GM23248 (cell line): ENCODE measurements at regions of chr21 and their contacts with region 1.

Region 1: DNA sequence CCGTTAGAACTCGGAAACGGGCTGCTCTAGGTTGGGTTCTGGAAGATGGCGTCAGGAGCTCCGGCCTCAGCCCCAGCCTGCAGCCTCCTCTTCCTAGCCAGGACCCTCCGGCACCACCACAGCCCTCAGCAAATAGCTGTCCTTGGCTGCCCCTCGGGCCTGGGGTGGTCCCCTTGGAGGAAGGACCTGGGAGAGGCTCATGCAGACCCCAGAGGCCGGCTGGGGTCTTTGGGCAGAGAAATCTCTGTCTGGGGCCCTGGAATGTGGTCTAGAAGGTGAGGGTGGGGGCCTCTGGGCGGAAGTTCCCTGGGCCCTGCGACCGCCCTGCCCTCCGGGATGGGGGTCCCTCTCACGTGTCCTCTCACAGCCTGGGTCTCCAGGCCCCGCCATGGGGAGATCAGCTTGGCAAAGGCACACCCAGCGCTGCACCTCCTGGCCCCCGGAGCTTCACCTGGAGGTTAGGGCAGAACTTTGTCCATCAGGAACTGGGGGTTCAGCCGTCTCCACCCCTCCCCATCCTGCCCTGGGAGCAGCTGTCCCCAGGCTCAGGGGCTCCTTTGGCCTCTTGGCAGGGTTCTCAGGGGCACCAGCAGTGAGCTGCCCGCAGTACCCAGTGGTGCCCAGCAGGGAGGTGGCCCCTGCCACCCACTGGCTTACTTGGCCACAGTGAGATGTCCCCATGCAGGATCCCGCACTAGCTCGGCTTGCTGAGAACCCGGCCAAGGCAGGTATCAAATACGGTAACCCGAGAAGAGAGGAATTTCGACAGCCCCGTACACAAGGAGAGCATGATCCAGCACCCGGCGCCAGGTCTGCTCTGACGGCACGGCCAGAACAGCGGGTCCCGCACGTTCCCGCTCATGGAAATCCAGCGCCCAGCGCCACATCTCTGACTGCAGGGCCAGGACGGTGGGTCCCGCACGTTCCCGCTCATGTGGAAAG is 36.6 kb downstream of the RRP1 start:
- DNase-seq: no peak
- H3K4me3 ChIP-seq: no peak overlapping the region
- H3K27ac ChIP-seq: no peak overlapping the region
- H3K4me1 ChIP-seq: peaks cover 8% of the 10 kb centered on the region; the same call in 1 of the 2 replicates
- H3K27me3 ChIP-seq: peaks cover 6% of the 10 kb centered on the region; the same call in 1 of the 2 replicates

Region 2: GRCh38 chr21:43639470-43640178 is 186.3 kb before region 1 on chr21:
- in situ Hi-C with region 1: no loop called
- DNase-seq: peak; percentile 81
- H3K4me3 ChIP-seq: no peak overlapping the region
- H3K27ac ChIP-seq: peak overlapping the region; percentile 70
- H3K4me1 ChIP-seq: peaks cover 11% of the 10 kb centered on the region
- H3K27me3 ChIP-seq: no peaks in the 10 kb centered on the region

Region 3: DNA sequence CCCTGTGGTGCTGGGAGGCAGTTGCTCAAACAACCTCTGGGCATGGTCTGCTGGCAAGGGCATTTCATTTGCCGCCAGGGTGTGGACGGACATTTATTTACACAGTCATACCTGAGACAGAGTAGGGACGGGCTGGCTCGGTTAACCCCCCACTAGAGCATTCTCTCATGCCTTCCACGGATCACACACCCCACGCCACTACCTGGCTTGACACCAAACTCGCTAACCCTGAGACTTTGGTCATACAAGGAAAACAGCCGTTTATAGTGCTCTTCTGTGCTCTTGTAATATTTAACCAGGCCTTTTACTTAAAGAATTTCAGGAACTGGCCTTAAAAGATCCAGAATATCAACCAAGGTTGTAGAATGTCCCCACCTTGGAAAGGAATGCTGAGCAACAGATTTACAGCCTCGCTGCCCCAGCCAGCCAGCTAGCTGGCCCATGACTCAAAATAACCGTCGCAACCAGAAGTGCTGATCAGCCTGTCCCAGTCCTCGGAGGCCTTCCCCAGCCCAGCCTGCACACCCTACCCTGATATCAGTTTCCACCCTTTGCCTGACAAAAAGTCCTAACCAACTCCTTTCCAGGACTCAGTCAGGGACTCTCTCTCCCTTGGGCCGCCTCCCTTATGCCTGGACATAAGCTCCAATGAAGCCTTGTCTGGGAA is 113.5 kb before region 1 on chr21:
- in situ Hi-C with region 1: no loop called
- DNase-seq: peak; percentile 78
- H3K4me3 ChIP-seq: 0 out of 2 replicates have a peak overlapping the region, but pooled peaks have one; percentile 17
- H3K27ac ChIP-seq: peak overlapping the region; percentile 42
- H3K4me1 ChIP-seq: peaks cover 13% of the 10 kb centered on the region
- H3K27me3 ChIP-seq: no peaks in the 10 kb centered on the region

Region 4: GRCh38 chr21:43893536-43894205 is 67.7 kb after region 1 on chr21:
- in situ Hi-C with region 1: no loop called
- DNase-seq: no peak
- H3K4me3 ChIP-seq: no peak overlapping the region
- H3K27ac ChIP-seq: no peak overlapping the region
- H3K4me1 ChIP-seq: no peaks in the 10 kb centered on the region
- H3K27me3 ChIP-seq: no peaks in the 10 kb centered on the region

Region 5: DNA sequence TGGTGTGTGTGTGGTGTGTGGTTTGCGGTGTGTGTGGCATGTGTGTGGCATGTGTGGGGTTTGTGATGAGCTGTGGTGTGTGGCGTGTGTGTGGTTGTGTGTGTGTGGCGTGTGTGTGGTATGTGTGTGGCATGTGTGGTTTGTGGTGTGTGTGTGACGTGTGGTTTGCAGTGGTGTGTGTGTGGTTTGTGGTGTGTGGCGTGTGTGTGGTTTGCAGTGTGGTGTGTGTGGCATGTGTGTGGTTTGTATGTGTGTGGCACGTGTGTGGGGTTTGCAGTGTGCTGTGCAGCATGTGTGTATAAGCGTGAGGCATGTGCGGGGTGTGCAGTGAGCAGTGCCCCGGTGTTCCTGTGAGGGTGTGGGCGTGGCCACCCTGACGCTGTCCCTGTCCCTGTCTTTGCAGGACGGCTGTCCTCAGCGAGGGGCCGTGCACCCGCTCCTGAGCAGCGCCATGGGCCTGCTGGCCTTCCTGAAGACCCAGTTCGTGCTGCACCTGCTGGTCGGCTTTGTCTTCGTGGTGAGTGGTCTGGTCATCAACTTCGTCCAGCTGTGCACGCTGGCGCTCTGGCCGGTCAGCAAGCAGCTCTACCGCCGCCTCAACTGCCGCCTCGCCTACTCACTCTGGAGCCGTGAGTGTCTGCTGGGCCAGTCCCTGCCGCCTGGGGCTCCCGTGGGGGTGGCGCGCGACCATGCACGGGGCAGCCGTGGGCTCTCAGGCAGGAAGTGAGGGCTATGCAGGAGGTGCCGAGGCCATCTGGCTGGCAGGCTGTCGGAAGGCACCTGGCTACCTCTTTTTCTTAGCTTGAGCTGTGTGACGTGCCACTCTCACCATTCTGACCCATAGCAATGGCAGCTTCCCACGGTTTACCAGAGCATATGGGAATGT is 133.5 kb after region 1 on chr21:
- in situ Hi-C with region 1: loop called (anchors 10 kb)
- DNase-seq: no peak
- H3K4me3 ChIP-seq: no peak overlapping the region
- H3K27ac ChIP-seq: no peak overlapping the region
- H3K4me1 ChIP-seq: no peaks in the 10 kb centered on the region
- H3K27me3 ChIP-seq: no peaks in the 10 kb centered on the region